ENCODE measurements at regions of chr17 and their contacts with region 1.

Region 1: DNA sequence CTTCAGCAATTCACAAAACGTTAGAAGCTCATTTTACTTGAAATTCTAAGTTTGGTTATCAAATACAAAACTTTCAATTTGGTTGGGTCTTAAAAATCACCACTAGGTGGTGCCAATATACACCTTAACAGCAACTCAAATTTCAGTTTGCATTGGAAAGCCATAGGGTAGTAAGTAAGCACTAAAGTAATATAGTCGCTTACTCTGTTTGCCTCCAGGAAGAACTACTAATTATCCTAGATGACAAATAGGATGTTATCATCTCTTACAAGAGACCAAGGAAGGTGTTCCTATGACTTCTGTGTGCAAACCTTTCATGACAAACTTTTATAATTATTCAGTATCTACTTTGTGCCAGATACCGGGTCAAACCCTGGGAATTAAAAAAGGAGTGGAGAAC is 93.3 kb downstream of the MYO1D start:
- DNase-seq: peak; percentile 27
- H3K4me3 ChIP-seq: no peak overlapping the region
- H3K27ac ChIP-seq: no peak overlapping the region
- H3K27me3 ChIP-seq: no peaks in the 10 kb centered on the region
- CTCF ChIP-seq: peak; percentile 70

Region 2: GRCh38 chr17:32794533-32795246 is 11.1 kb after region 1 on chr17:
- CTCF ChIA-PET with region 1: interaction called, 26 read pairs
- POLR2A ChIA-PET with region 1: no interaction called
- DNase-seq: no peak
- H3K4me3 ChIP-seq: no peak overlapping the region
- H3K27ac ChIP-seq: no peak overlapping the region
- H3K27me3 ChIP-seq: peaks cover 2% of the 10 kb centered on the region
- CTCF ChIP-seq: no peak

Region 3: DNA sequence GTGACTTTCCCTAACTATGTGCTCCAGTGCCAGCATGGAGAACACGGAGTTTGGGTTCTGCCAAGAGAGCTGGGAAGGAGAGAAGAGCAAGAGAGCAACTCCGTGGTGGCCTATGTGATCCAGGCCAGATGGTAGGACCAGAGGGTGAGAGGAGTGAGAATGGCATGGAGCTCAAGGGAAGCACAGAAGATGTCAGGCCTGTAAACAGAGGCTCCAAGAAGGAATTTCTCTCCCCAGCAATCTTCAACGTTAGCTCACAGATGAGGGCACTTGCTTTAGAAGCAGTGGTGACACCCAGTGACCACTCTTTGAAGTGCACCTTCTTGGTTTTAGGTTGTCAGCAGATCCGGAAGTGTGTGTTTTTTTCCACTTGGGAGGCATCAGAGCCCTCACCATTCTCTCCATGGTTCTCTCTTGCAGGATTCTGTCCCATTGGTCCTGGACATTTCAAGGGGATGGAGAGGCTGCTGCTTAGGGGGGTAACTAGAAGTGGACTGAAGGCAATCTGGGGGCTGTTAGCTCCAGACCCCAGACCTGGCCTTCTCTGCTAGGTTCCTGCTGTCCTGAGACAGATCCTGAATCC is 126.3 kb after region 1 on chr17:
- CTCF ChIA-PET with region 1: interaction called, 109 read pairs
- POLR2A ChIA-PET with region 1: no interaction called
- DNase-seq: peak; percentile 66
- H3K4me3 ChIP-seq: no peak overlapping the region
- H3K27ac ChIP-seq: no peak overlapping the region
- H3K27me3 ChIP-seq: peaks cover 1% of the 10 kb centered on the region
- CTCF ChIP-seq: peak; percentile 84

Region 4: DNA sequence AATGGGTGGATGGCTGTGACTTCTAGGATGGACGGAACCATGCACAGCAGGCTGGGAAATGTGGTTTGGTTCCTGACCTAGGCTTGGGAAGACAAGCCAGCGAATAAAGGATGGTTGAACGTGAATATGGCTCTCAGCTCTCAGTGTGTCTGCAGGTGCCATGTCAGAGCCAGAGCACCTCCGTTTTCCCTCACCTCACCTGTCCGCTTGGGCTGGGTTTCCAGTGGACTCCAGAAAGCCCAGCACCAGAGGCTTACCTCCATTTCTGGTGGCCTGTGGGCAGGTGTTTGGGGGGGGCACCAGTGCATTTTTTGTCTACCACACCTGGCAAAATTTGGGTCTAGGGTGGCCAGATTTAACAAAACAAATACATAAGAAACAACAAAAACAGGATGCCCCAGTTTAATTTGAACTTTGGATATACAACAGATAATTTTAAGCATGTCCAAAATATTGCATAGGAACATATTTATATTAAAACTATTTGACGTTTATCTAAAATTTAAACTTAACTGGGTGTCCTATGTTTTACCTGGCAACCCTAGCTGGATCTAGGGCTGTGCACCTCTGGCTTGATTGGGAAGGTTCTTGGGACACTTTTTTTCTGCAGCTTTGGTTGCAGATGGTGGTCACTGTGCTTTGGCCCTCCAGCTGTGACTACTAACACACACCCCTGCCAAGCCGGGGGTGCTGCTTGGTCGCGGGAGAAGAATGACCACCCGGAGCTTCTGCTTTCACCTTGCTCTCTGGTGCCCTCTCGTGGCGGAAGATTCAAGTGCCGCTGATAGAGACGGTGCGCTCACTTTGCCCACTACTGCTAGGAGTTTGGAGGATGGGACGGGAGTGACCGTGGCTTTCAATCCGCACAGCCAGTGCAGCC is 214.4 kb after region 1 on chr17:
- CTCF ChIA-PET with region 1: interaction called, 85 read pairs
- POLR2A ChIA-PET with region 1: no interaction called
- DNase-seq: peak; percentile 33
- H3K4me3 ChIP-seq: peak overlapping the region; percentile 18
- H3K27ac ChIP-seq: peak overlapping the region; percentile 11
- H3K27me3 ChIP-seq: peaks cover 14% of the 10 kb centered on the region
- CTCF ChIP-seq: peak; percentile 92